ENCODE measurements at regions of chr1 and their contacts with region 1.

Region 1: GRCh38 chr1:26233903-26234643 is at the start of gene CEP85:
- DNase-seq: peak; percentile 89 to 98
- H3K4me3 ChIP-seq: peak within 1 kb of the TSS; percentile 84
- H3K27ac ChIP-seq: 0 out of 2 replicates have a peak within 1 kb of the TSS, but pooled peaks have one; percentile 16
- H3K4me1 ChIP-seq: peaks cover 31% of the 10 kb centered on the region
- H3K27me3 ChIP-seq: no peaks in the 10 kb centered on the region
- CTCF ChIP-seq: peak; percentile 80
- total RNA-seq, gene CEP85: 34.0 and 42.5 TPM in 2 replicates

Region 2: DNA sequence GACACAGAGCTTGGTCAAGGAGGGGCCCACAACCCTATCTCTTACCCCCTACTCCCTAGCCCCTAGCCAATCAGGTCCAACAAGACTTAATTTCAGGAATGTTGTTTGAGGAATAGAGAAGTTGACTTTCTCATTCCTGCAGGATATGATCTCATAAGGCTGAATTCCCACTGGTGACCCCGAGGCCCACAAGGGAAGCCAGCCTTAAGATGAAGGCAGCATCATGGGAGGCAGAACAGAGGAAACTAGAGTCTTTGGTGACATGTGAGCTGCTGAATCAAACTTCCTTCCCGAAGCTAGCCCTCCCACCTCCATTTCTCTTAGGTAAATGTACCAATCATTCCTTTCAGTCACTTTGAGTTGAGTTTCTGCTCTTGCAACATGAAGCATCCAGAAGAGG is 131.5 kb before region 1 on chr1:
- CTCF ChIA-PET with region 1: no interaction called
- POLR2A ChIA-PET with region 1: interaction called, 7 read pairs
- intact Hi-C with region 1: loop called (anchors 1 kb)
- DNase-seq: no peak
- H3K4me3 ChIP-seq: no peak overlapping the region
- H3K27ac ChIP-seq: no peak overlapping the region
- H3K4me1 ChIP-seq: peaks cover 11% of the 10 kb centered on the region
- H3K27me3 ChIP-seq: no peaks in the 10 kb centered on the region
- CTCF ChIP-seq: no peak

Region 3: GRCh38 chr1:26111530-26112406 is 122.3 kb before region 1 on chr1 and contains the start of gene PDIK1L:
- CTCF ChIA-PET with region 1: no interaction called
- POLR2A ChIA-PET with region 1: interaction called, 24 read pairs
- intact Hi-C with region 1: no loop called
- DNase-seq: peak; percentile 81 to 92
- H3K4me3 ChIP-seq: peak within 1 kb of the TSS; percentile 80
- H3K27ac ChIP-seq: peak within 1 kb of the TSS; percentile 58
- H3K4me1 ChIP-seq: peaks cover 24% of the 10 kb centered on the region
- H3K27me3 ChIP-seq: no peaks in the 10 kb centered on the region
- CTCF ChIP-seq: no peak
- total RNA-seq, gene PDIK1L: 7.6 and 8.4 TPM in 2 replicates

Region 4: GRCh38 chr1:26177182-26177684 is 56.8 kb before region 1 on chr1 and contains the start of gene CNKSR1:
- CTCF ChIA-PET with region 1: interaction called, 7 read pairs
- POLR2A ChIA-PET with region 1: interaction called, 16 read pairs
- intact Hi-C with region 1: loop called (anchors 1 kb)
- DNase-seq: peak; percentile 88 to 89
- H3K4me3 ChIP-seq: peak within 1 kb of the TSS; percentile 67
- H3K27ac ChIP-seq: peak within 1 kb of the TSS; percentile 64
- H3K4me1 ChIP-seq: peaks cover 21% of the 10 kb centered on the region
- H3K27me3 ChIP-seq: no peaks in the 10 kb centered on the region
- CTCF ChIP-seq: peak; percentile 71
- total RNA-seq, gene CNKSR1: 31.6 and 33.4 TPM in 2 replicates

Region 5: DNA sequence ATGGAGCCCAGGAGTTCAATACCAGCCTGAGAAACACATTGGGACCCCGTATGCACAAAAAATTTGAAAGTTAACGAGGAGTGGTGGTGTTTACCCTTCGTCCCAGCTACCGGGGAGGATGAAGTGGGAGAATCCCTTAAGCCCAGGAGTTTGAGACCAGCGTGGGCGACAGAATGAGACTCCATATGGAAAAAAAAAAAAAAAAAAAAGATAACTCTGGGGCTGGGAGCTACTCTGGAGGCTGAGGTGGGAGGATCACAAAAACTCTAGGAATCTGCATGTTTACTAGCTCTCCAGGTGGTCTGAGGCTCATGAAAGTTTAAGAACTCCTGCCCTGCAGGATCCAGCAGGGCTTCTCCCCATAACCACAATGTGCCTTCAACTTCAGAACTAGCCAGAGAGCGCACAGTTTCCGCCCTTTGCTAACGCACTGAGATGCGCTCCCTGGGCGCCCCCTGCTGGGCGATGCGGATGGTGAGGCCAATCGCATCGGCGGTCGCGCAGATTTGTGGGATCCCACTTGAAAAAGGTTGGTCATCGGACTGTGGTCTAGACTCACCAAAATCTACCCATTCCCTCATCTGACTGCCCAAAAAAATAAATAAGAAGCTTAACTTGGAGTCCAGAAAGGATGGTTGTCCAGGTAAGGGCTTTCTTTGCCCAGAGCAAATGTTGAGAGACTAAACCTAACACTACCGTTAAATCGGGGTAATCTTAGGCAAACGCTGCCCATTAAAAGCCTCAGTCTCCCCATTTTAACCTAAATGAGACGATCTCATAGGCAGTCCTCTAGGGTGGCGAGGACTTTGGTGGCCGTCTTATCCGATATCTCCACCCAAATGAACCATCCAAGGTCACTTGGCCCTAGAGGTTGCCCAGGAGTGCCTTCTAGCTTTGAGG is 129.7 kb after region 1 on chr1:
- CTCF ChIA-PET with region 1: interaction called, 3 read pairs
- POLR2A ChIA-PET with region 1: no interaction called
- intact Hi-C with region 1: loop called (anchors 5 kb)
- DNase-seq: peak in 1 of 2 experiments; percentile 76
- H3K4me3 ChIP-seq: no peak overlapping the region
- H3K27ac ChIP-seq: no peak overlapping the region
- H3K4me1 ChIP-seq: peaks cover 7% of the 10 kb centered on the region
- H3K27me3 ChIP-seq: no peaks in the 10 kb centered on the region
- CTCF ChIP-seq: peak; percentile 80

Measured in PC-9 (cell line).